Sigmoid colon (tissue), 7 donors: ENCODE measurements at regions of chr3 and their contacts with region 1.

Region 1: DNA sequence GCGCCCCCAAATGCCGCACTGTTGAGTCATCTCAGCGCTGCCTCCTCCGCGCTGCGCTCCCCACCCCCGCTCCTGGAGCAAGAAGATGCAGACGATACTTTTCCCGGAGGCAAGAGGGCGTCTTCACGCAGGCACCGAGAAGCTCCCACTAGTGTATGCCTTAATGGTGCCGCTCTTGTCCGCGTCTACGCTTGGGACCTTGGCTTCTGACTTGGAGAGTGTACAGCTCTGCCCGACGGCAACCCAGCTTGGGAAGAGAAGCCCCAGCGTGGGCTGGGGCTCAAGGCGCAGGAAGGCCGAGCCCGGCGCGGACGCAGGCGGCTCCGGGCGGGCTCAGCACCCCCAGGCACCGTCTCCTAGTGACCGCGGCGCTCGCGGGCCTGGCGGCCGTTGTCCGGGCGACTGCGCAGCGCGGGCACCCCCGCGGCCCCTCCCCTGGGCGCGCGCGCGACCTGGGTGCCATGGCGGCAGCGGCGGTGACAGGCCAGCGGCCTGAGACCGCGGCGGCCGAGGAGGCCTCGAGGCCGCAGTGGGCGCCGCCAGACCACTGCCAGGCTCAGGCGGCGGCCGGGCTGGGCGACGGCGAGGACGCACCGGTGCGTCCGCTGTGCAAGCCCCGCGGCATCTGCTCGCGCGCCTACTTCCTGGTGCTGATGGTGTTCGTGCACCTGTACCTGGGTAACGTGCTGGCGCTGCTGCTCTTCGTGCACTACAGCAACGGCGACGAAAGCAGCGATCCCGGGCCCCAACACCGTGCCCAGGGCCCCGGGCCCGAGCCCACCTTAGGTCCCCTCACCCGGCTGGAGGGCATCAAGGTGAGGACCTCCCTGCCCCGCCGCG is at the start of gene P4HTM:
- DNase-seq: peak; percentile 97
- H3K4me3 ChIP-seq: peak within 1 kb of the TSS; percentile 62 to 95 (median 90)
- H3K27ac ChIP-seq: peak within 1 kb of the TSS; percentile 93 to 97 (median 96)
- H3K4me1 ChIP-seq: peaks cover 0 to 33% (median 26%) of the 10 kb centered on the region in 4 donors
- H3K27me3 ChIP-seq: no peaks in the 10 kb centered on the region
- CTCF ChIP-seq: peak in 3 of 4 experiments; percentile 12 to 40 (median 18)
- EP300 ChIP-seq: no peak
- POLR2A ChIP-seq: peak; percentile 64 to 71
- total RNA-seq, gene P4HTM: 30.9 to 41.3 (median 33.4) TPM

Region 2: DNA sequence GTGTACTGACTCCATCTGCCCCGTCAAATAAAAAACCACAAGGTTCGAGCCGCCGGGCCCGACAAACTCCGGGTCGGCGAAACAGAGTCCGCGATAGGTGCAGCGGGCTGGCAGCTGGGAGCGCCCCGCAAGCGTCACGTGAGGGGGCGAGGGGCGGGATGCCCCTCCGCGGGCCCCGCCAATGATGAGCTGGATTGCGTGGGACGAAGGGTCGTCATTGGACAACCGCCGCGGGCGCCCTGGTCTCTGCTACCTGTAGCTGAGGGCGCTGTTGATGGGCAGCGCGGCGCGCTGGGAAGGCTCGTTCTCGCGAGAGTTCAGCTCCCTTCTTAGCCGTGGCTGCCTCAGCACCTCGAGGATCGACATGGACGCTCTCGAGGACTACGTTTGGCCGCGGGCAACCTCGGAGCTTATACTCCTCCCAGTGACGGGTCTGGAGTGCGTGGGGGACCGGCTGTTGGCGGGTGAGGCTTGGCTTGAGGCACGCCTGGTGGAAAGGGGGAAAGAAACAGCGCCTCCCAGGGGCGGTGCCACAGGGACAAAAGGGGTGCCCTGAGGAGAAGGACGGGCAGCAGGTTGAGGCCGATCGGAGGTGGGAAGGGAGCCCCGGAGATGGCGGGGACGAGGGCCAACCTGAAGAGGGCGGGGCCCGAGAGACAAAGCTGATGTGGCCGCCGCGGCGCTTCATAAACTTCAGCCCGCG is 17.2 kb after region 1 on chr3 and contains the start of gene WDR6:
- intact Hi-C with region 1: loop called (anchors 2 kb)
- DNase-seq: peak; percentile 99
- H3K4me3 ChIP-seq: peak within 1 kb of the TSS; percentile 55 to 88 (median 64)
- H3K27ac ChIP-seq: peak within 1 kb of the TSS; percentile 87 to 99 (median 94)
- H3K4me1 ChIP-seq: peaks cover 0 to 34% (median 22%) of the 10 kb centered on the region in 4 donors
- H3K27me3 ChIP-seq: no peaks in the 10 kb centered on the region
- CTCF ChIP-seq: peak; percentile 5 to 41 (median 34)
- EP300 ChIP-seq: no peak
- POLR2A ChIP-seq: peak; percentile 60 to 64
- total RNA-seq, gene WDR6: 71.3 to 122 (median 93.5) TPM

Region 3: GRCh38 chr3:49028673-49029562 is 38.9 kb after region 1 on chr3 and contains the start of gene IMPDH2:
- intact Hi-C with region 1: loop called (anchors 2 kb)
- DNase-seq: peak; percentile 96
- H3K4me3 ChIP-seq: peak within 1 kb of the TSS; percentile 71 to 80 (median 78)
- H3K27ac ChIP-seq: peak within 1 kb of the TSS; percentile 94 to 98 (median 94)
- H3K4me1 ChIP-seq: peaks cover 0 to 35% (median 20%) of the 10 kb centered on the region in 4 donors
- H3K27me3 ChIP-seq: no peaks in the 10 kb centered on the region
- CTCF ChIP-seq: no peak
- EP300 ChIP-seq: peak in 1 of 4 donors; percentile 72
- POLR2A ChIP-seq: peak; percentile 97 to 98
- total RNA-seq, gene IMPDH2: 91.1 to 126 (median 109) TPM

Region 4: DNA sequence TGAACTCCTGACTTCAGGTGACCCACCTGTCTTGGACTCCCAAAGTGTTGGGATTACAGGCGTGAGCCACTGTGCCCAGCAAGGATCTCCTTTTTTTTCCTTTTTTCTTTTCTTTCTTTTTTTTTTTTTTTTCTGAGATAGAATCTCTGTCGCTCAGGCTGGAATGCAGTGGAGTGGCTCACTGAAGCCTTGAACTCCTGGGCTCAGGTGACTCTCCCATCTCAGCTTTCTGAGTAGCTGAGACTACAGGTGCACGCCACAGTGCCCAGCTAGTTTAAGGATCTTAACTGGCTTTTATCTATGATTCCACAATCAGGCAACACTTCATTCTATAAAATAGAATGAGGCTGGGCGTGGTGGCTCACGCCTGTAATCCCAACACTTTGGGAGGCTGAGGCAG is 455.4 kb after region 1 on chr3:
- intact Hi-C with region 1: loop called (anchors 5 kb)
- DNase-seq: no peak
- H3K4me3 ChIP-seq: no peak overlapping the region
- H3K27ac ChIP-seq: no peak overlapping the region
- H3K4me1 ChIP-seq: peaks cover 0 to 15% (median 11%) of the 10 kb centered on the region in 4 donors
- H3K27me3 ChIP-seq: no peaks in the 10 kb centered on the region
- CTCF ChIP-seq: no peak
- EP300 ChIP-seq: no peak
- POLR2A ChIP-seq: no peak